ENCODE measurements at regions of chr3 and their contacts with region 1.

Region 1: DNA sequence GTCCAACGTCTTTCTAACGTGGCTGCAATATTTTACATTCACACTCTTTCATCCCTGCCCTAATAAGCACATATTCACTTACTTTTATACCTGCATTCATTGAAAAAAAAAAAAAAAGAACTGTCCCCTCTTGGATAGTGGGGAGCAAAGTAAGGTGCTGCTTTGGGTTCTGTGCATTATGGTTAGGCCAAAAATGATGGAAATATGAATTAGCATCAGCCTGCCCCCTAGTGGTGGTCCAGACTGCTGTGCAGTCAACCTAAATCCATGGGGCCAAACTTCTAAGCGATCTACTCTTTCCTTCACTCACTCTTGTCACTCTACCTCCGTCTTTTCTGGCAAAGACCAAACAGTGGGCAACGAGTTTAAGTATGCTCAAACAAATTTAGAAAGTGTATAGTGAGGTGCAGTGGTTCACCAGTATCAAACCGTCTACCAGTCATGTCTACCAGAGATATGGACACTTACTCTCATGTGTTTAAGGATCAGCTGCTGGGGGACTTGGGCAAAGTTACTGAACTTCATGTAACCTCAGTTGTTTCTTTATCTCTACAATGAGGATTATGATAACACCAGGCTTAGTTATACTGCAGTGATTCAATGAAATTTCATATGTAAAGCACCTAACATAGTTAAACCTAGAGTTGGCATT is 61.5 kb upstream of the GRM7 start:
- DNase-seq: peak in 2 of 3 donors; percentile 19 to 53
- ATAC-seq: peak in 1 of 2 donors; percentile 41
- H3K4me3 ChIP-seq: no peak overlapping the region
- H3K27ac ChIP-seq: no peak overlapping the region
- H3K4me1 ChIP-seq: no peaks in the 10 kb centered on the region
- H3K27me3 ChIP-seq: no peaks in the 10 kb centered on the region

Region 2: GRCh38 chr3:6392123-6392522 is 407.3 kb before region 1 on chr3:
- intact Hi-C with region 1: loop called in 1 of 4 experiments (anchors 5 kb)
- DNase-seq: no peak
- ATAC-seq: no peak
- H3K4me3 ChIP-seq: no peak overlapping the region
- H3K27ac ChIP-seq: no peak overlapping the region
- H3K4me1 ChIP-seq: no peaks in the 10 kb centered on the region
- H3K27me3 ChIP-seq: no peaks in the 10 kb centered on the region

Region 3: DNA sequence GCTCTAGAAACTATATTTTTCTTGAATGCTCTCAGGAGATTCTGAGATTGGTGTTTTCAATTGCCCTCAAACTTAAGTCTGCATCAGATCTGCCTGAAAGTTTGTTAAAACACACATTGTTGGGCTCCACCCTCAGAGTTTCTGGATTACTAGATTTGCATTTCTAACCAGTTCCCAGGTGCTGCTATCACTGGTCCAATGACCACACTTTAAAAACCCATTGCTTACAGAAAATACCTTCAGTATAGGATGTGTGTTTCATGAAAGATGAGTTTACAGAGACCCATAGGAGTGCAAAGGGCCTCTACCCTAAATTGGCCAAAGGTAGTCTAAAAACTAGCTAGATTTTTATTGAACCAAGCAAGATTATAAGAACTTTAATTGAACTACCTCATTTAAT is 79.3 kb after region 1 on chr3:
- intact Hi-C with region 1: no loop called
- DNase-seq: no peak
- ATAC-seq: no peak
- H3K4me3 ChIP-seq: no peak overlapping the region
- H3K27ac ChIP-seq: no peak overlapping the region
- H3K4me1 ChIP-seq: no peaks in the 10 kb centered on the region
- H3K27me3 ChIP-seq: no peaks in the 10 kb centered on the region

Region 4: GRCh38 chr3:6892803-6893202 is 93.4 kb after region 1 on chr3:
- intact Hi-C with region 1: no loop called
- DNase-seq: no peak
- ATAC-seq: no peak
- H3K4me3 ChIP-seq: no peak overlapping the region
- H3K27ac ChIP-seq: no peak overlapping the region
- H3K4me1 ChIP-seq: no peaks in the 10 kb centered on the region
- H3K27me3 ChIP-seq: no peaks in the 10 kb centered on the region